ENCODE measurements at regions of chr11 and their contacts with region 1.

Region 1: DNA sequence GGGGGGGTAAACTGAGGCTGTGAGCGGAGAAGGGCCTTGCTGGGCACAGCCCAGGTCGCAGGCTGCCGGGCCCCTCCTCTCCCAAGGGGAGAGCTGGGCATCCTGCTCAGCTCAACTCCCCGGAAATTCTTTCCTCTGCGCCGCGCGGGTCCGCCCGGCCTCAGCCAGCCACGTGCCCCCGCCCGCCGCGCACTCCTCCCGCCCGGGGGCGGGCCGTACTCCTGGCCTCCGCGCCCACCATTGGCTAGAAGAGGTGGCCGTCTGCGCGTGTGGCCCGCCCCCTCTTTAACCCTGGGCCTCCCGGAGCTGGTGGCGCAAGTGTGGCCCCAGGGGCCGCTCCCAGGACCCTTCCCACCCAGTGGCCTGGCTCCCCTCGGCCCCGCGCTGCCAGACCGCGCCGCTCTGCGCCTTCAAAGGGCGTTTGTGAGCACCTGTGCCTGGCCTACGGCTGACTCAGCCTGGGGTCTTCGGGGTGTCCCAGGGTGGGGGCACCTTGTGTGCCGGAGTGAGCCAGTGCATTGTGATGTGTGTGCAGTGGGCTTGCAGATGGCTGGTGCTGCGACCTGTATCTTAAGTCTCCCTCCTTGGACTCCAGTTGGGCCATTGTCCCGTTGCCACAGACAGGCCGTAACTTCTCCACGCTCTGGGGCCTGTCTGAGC is 2.0 kb downstream of the MRGPRF start:
- DNase-seq: peak; percentile 87 to 93 (median 89)
- H3K4me3 ChIP-seq: peak overlapping the region; percentile 67
- H3K27ac ChIP-seq: peak overlapping the region; percentile 86 to 90
- H3K4me1 ChIP-seq: peaks cover 40% of the 10 kb centered on the region
- H3K27me3 ChIP-seq: no peaks in the 10 kb centered on the region
- CTCF ChIP-seq: no peak
- EP300 ChIP-seq: no peak
- POLR2A ChIP-seq: no peak

Region 2: GRCh38 chr11:68574308-68574707 is 436.8 kb before region 1 on chr11:
- intact Hi-C with region 1: no loop called
- DNase-seq: no peak
- H3K4me3 ChIP-seq: no peak overlapping the region
- H3K27ac ChIP-seq: no peak overlapping the region
- H3K4me1 ChIP-seq: no peaks in the 10 kb centered on the region
- H3K27me3 ChIP-seq: no peaks in the 10 kb centered on the region
- CTCF ChIP-seq: no peak
- EP300 ChIP-seq: no peak
- POLR2A ChIP-seq: no peak

Region 3: DNA sequence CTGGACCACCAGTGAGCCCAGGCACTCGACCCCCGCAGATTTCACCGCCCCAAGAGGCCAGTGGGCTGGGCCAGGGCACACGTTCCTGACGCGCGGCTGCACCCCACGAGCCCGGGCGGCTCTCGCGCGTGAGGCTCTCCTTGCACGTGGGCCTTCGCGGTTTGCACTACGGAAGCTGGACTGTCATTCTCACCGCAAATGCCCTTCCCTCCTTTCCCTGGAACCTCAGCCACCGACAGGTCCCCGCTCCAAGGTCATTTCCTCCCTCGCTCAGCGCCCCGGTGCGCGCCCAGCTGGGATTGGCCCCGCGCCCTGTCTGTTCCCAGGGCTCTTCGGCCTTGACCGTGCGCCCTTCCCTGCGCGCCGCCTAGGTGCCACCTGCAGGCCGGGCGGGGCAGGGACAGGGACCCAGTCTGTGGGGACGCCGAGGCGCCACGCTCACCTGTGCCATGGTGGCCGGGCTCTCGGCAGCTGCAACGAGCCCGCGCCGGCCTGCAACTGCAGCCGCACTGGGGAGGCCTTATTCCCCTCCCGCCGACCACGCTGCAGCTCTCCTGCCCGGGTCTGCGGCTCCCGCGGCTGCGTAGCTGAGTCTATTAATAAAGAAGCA is 167.3 kb before region 1 on chr11:
- intact Hi-C with region 1: loop called in 1 of 4 experiments (anchors 10 kb)
- DNase-seq: peak; percentile 56 to 79 (median 66)
- H3K4me3 ChIP-seq: peak overlapping the region; percentile 66
- H3K27ac ChIP-seq: peak overlapping the region in 1 of 2 donors; percentile 30
- H3K4me1 ChIP-seq: peaks cover 8% of the 10 kb centered on the region
- H3K27me3 ChIP-seq: no peaks in the 10 kb centered on the region
- CTCF ChIP-seq: peak in 1 of 3 donors; percentile 29
- EP300 ChIP-seq: no peak
- POLR2A ChIP-seq: no peak

Region 4: DNA sequence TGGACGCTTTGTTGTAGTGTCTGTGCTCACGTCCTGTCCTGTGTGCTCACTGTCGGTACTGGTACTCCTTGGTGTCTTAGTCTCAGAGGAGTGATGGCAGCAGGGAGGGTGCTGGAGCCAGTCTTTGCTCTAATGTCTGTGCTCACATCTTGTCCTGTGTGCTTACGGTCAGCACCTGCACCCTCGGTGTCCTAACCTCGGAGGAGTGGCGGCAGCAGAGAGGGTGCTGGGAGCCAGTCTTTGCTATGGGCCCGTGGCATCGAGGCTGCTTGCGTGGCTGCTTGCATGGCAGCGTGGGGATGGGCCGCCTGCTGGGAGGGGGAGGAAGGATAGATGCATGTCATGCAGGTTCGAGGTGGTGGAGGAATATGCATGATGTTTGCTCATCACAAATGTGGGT is 94.7 kb before region 1 on chr11:
- intact Hi-C with region 1: no loop called
- DNase-seq: peak in 1 of 5 donors; percentile 14
- H3K4me3 ChIP-seq: no peak overlapping the region
- H3K27ac ChIP-seq: no peak overlapping the region
- H3K4me1 ChIP-seq: no peaks in the 10 kb centered on the region
- H3K27me3 ChIP-seq: no peaks in the 10 kb centered on the region
- CTCF ChIP-seq: no peak
- EP300 ChIP-seq: no peak
- POLR2A ChIP-seq: no peak

Region 5: GRCh38 chr11:69048718-69049489 is 37.8 kb after region 1 on chr11 and contains the start of gene TPCN2:
- intact Hi-C with region 1: loop called (anchors 2 to 5 kb)
- DNase-seq: peak; percentile 94 to 97 (median 96)
- H3K4me3 ChIP-seq: peak within 1 kb of the TSS; percentile 75
- H3K27ac ChIP-seq: peak within 1 kb of the TSS; percentile 85 to 91
- H3K4me1 ChIP-seq: peaks cover 13% of the 10 kb centered on the region
- H3K27me3 ChIP-seq: no peaks in the 10 kb centered on the region
- CTCF ChIP-seq: peak in 1 of 3 donors; percentile 42
- EP300 ChIP-seq: no peak
- POLR2A ChIP-seq: peak; percentile 91
- total RNA-seq, gene TPCN2: 20.2 to 35.7 (median 23.7) TPM

Region 6: GRCh38 chr11:69088676-69089146 is 77.6 kb after region 1 on chr11:
- intact Hi-C with region 1: loop called in 1 of 4 experiments (anchors 5 kb)
- DNase-seq: peak; percentile 69 to 86 (median 82)
- H3K4me3 ChIP-seq: no peak overlapping the region
- H3K27ac ChIP-seq: no peak overlapping the region
- H3K4me1 ChIP-seq: no peaks in the 10 kb centered on the region
- H3K27me3 ChIP-seq: no peaks in the 10 kb centered on the region
- CTCF ChIP-seq: peak; percentile 71 to 79 (median 75)
- EP300 ChIP-seq: no peak
- POLR2A ChIP-seq: no peak

Region 7: GRCh38 chr11:69257838-69258658 is 247.0 kb after region 1 on chr11:
- intact Hi-C with region 1: no loop called
- DNase-seq: peak in 1 of 5 donors; percentile 2
- H3K4me3 ChIP-seq: no peak overlapping the region
- H3K27ac ChIP-seq: no peak overlapping the region
- H3K4me1 ChIP-seq: no peaks in the 10 kb centered on the region
- H3K27me3 ChIP-seq: no peaks in the 10 kb centered on the region
- CTCF ChIP-seq: no peak
- EP300 ChIP-seq: no peak
- POLR2A ChIP-seq: no peak